ENCODE measurements at regions of chr16 and their contacts with region 1.

Region 1: GRCh38 chr16:71358464-71358998 is at the start of gene CALB2:
- DNase-seq: peak; percentile 91
- H3K4me3 Mint-ChIP-seq: peak within 1 kb of the TSS; percentile 82
- H3K27ac Mint-ChIP-seq: peak within 1 kb of the TSS; percentile 69
- H3K4me1 Mint-ChIP-seq: peaks cover 41% of the 10 kb centered on the region
- H3K27me3 Mint-ChIP-seq: no peaks in the 10 kb centered on the region
- CTCF ChIP-seq: peak; percentile 99
- total RNA-seq, gene CALB2: 16.6 and 35.1 TPM in 2 replicates

Region 2: DNA sequence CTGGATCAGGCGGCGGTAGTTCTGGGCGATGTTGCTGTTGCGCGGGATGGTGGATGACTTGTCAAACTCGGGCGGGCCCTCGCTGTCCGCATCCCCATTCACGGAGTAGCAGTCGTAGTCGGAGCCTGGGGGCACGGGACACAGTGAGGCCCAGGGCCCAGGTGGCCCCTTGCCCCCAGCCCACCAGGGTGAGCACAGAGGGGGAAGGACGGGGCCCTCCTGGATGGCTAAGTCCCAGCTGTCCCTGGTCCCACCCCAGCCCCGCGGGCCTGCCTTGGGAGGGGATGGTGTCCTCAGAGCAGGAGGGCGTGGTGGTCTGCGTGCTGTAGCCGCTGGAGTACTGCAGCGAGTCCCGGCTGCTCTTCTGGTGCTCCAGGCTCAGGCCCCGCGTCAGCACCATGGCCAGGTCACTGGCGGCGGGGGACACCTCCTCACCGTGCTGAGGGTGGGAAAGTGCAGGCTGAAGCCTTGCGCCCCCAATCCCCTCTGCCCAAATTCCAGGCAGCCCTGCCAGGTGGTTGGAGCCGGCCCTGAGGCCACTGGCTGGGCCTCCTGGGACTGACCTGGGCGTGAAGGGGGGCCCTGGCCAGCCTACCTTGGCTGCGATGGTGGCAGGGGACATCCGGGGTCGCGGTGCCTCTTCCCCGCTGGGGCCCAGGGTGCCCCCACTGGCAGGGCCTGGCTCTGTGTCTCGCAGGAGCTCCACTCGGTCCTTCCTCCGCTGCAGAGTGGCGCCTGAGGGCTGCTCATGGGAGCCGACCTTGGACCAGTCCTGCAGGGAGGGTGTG is 694.0 kb before region 1 on chr16:
- CTCF ChIA-PET with region 1: no interaction called
- intact Hi-C with region 1: no loop called
- DNase-seq: no peak
- H3K4me3 Mint-ChIP-seq: no peak overlapping the region
- H3K27ac Mint-ChIP-seq: no peak overlapping the region
- H3K4me1 Mint-ChIP-seq: no peaks in the 10 kb centered on the region
- H3K27me3 Mint-ChIP-seq: no peaks in the 10 kb centered on the region
- CTCF ChIP-seq: no peak

Region 3: DNA sequence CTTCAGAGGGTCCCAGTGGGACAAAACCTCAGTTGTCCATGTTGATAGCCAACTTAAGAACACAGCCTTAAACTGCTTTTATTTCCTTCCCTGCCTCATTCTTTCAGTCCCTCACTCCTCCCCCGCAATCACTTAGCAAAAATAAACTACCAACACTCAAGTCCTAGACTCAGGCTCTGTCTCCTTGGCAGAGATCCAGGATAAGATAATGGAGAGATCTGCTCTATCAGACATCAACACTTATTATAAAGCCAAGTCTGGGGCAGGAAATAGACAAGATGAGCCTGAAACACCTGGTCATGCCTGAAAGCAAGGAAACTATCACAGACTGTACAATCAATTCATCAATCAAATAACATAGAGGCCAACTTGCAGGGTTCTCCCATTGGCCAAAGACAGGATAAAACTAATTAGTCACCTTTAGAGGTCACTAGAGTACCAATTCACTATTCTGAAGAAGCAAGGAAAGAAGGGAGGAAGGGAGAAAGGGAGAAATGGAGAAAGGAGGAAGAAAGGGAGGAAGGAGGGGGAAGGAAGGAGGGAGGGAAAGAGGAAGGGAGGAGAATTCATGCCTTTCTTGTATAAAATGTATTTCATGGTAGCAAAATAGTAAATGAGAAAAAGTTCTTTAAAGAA is 143.7 kb before region 1 on chr16:
- CTCF ChIA-PET with region 1: interaction called, 3 read pairs
- intact Hi-C with region 1: loop called (anchors 1 kb)
- DNase-seq: no peak
- H3K4me3 Mint-ChIP-seq: no peak overlapping the region
- H3K27ac Mint-ChIP-seq: no peak overlapping the region
- H3K4me1 Mint-ChIP-seq: no peaks in the 10 kb centered on the region
- H3K27me3 Mint-ChIP-seq: no peaks in the 10 kb centered on the region
- CTCF ChIP-seq: no peak

Region 4: GRCh38 chr16:71273384-71273783 is 85.1 kb before region 1 on chr16:
- CTCF ChIA-PET with region 1: no interaction called
- intact Hi-C with region 1: no loop called
- DNase-seq: no peak
- H3K4me3 Mint-ChIP-seq: no peak overlapping the region
- H3K27ac Mint-ChIP-seq: no peak overlapping the region
- H3K4me1 Mint-ChIP-seq: no peaks in the 10 kb centered on the region
- H3K27me3 Mint-ChIP-seq: no peaks in the 10 kb centered on the region
- CTCF ChIP-seq: no peak

Region 5: GRCh38 chr16:71288890-71289733 is 69.4 kb before region 1 on chr16 and contains the start of gene CMTR2:
- CTCF ChIA-PET with region 1: interaction called, 4 read pairs
- intact Hi-C with region 1: loop called (anchors 5 kb)
- DNase-seq: peak; percentile 97
- H3K4me3 Mint-ChIP-seq: peak within 1 kb of the TSS; percentile 66
- H3K27ac Mint-ChIP-seq: peak within 1 kb of the TSS; percentile 50
- H3K4me1 Mint-ChIP-seq: peaks cover 23% of the 10 kb centered on the region
- H3K27me3 Mint-ChIP-seq: no peaks in the 10 kb centered on the region
- CTCF ChIP-seq: no peak
- total RNA-seq, gene CMTR2: 44.4 and 45.0 TPM in 2 replicates